ENCODE measurements at regions of chr10 and their contacts with region 1.

Region 1: DNA sequence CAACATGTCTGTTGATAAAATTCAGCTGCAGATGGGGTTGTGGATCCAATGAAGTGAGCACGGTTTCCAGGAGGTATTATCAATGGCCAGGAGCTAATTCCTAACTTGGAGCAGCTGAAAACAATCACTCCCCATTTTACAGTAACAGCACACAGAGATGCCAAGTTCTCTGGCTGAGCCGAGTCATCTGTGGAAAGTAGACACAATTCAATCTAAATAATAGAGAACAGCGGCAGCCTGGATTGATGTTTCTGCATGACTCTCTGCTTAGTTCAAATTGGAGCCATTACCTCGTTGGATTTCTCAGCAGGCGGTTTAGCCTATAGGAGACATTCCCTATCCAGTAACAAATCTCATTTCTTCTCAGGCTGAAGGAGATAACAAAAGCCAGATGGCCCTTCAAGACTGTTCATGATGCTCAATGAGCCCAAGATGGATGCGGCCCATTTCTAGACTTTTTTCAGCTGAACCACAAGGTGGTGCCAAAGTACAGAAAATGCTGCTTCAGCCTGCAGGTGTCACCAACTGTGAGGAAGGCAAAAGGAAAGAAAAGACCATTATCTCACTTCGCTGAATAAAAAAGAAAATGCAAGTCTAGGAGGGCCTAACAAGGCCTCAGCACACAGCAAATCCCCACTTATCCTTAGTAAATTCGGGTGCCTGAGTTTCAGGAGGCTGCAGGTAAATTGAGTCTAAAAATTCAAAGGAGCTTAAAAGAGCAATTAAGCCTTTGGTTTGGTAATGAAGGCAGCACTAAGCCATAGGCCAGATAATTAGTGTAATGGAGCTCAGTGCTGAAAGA is 83.7 kb downstream of the SLC16A9 start:
- DNase-seq: no peak
- H3K4me3 ChIP-seq: no peak overlapping the region
- H3K27ac ChIP-seq: peak overlapping the region; percentile 40
- H3K4me1 ChIP-seq: peaks cover 9% of the 10 kb centered on the region
- H3K27me3 ChIP-seq: peaks cover 11% of the 10 kb centered on the region
- CTCF ChIP-seq: peak; percentile 82

Region 2: DNA sequence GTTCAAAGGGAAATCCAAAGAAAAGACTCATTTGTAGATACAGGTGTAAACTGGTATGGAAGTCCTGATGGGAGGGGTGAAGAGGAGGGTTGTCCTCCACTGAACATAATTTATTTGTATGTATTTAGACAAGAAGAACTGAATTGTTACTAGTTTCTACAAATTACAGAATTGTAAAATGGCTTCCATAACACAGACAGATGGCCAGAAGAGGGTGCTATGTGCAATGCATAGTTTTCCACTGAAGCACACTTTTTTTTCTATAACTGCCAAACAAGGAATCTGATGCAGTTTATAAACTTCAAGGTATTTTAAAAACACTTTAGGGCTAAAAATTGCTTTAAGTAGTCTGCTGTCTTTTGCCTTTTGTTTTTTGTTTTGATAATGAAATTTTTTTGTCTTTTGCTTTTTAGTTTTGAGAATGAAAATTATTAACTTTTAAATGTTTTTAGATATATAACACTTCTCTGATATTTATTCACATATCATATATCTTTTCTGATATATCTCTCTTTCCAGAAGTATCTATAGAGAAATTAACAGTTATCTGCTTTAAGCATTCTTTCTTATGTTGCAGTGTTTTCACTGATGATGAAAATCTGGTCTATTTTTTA is 391.0 kb before region 1 on chr10:
- intact Hi-C with region 1: loop called (anchors 5 kb)
- DNase-seq: no peak
- H3K4me3 ChIP-seq: no peak overlapping the region
- H3K27ac ChIP-seq: no peak overlapping the region
- H3K4me1 ChIP-seq: no peaks in the 10 kb centered on the region
- H3K27me3 ChIP-seq: no peaks in the 10 kb centered on the region
- CTCF ChIP-seq: peak; percentile 65

Region 3: GRCh38 chr10:59517996-59518395 is 107.9 kb before region 1 on chr10:
- intact Hi-C with region 1: no loop called
- DNase-seq: no peak
- H3K4me3 ChIP-seq: no peak overlapping the region
- H3K27ac ChIP-seq: no peak overlapping the region
- H3K4me1 ChIP-seq: no peaks in the 10 kb centered on the region
- H3K27me3 ChIP-seq: no peaks in the 10 kb centered on the region
- CTCF ChIP-seq: no peak

Region 4: GRCh38 chr10:59779756-59780533 is 154.0 kb after region 1 on chr10:
- intact Hi-C with region 1: no loop called
- DNase-seq: no peak
- H3K4me3 ChIP-seq: no peak overlapping the region
- H3K27ac ChIP-seq: no peak overlapping the region
- H3K4me1 ChIP-seq: no peaks in the 10 kb centered on the region
- H3K27me3 ChIP-seq: no peaks in the 10 kb centered on the region
- CTCF ChIP-seq: no peak

Region 5: DNA sequence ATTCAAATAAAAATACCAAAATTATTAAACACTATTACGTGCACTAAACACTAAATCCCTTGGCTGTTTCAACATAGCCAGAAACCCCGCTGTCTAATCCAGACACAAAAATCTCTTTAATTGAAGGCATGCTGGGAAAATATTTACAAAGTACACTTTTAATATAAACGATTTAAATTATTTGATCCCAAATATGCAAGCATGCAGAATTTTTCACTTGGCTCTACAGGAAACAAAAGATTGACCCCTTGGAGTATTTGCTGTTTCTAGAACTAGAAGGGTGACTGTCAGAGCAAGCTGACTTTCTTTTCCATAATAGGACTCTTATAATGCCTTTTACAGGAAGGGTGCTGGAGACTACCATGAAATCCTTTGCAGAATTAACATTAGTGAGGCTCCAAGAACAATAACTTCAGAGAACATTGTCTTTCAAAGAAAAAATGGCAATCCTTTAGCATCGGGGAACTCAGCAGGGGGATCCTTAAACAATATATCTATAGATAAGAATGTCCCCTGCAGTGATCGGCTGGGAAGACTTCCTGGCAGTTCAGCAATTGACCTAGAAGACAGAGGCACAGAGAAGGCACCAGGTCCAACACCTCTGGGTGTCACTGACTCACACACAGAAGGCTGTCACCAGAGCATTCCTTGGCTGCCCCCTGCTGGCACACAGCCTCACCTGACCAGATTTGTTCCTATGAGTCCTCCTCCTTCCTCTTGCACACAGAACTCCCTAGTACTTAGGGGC is 183.1 kb after region 1 on chr10:
- intact Hi-C with region 1: loop called (anchors 5 kb)
- DNase-seq: peak; percentile 72
- H3K4me3 ChIP-seq: no peak overlapping the region
- H3K27ac ChIP-seq: peak overlapping the region; percentile 73
- H3K4me1 ChIP-seq: peaks cover 25% of the 10 kb centered on the region
- H3K27me3 ChIP-seq: no peaks in the 10 kb centered on the region
- CTCF ChIP-seq: peak; percentile 72